ENCODE measurements at regions of chr5 and their contacts with region 1.

Region 1: DNA sequence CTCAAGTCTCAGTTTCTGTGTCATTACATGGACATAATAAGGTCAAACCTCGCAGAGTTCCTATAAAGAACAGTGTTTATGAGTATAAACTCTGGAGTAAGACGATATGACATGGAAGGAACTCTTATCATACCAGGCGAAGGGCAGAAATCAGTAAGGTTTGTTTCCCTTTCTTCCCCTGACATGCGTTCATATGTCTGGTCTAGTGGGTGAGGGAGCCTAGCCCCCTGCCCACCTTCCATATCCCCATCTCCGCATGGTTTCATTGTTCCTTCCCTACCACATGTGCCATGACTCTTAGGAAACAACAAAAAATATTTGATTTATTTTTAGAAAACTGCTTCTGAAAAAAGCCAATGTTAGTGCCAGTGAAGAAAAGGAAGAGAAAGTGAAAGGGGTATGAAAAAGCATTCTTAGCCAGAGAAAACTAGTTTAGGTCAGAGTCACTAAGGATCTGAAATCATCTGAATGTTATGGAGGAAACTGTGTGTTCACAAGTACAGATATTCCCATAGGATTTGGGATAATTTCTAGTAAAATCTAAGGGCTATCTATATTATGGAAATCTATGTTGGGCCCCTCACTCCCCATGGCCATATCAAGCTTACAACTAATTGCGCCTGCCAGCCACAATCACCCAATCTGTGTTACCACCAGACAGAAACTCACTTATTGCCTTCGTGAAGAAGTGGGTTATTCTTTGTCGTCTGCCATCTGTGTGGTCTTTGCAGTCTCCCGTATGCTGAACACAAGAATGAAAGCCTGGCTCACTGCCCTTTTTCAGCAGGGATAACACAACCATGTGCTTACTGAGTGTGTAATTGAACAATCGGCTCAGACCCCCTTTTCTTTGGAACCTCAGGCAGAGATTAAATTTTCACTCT is 19.9 kb upstream of the HMHB1 start:
- DNase-seq: no peak
- ATAC-seq: no peak
- H3K4me3 ChIP-seq: no peak overlapping the region
- H3K27ac ChIP-seq: no peak overlapping the region
- H3K4me1 ChIP-seq: no peaks in the 10 kb centered on the region
- H3K27me3 ChIP-seq: no peaks in the 10 kb centered on the region
- CTCF ChIP-seq: no peak

Region 2: DNA sequence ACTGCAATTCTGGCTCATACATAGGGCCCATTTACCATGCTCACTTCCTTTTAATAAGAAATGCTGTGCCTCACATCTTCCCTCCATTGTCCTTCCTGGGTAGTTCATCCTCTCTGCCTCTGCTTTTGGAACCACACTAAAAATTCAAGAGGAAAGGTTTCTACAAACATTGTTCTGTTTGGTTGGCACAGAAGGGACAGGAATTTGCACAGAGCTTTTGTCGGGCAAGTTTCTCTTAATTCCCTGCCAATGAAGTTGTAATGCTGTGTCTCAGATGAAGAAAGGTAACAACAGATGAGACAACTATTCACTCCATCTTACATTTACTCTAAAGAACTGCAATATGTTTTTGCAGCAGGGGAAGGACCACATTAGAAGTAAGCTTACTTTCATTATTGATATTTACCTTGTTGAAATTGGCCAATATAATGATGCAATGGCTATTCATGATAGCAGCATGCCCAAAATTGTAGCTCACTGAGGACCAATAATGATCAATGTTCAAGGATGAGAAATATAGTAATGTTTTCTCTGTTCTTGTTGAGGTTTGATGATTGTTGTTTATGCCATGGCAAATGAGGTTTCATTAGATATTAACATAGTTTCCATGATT is 62.6 kb before region 1 on chr5:
- CTCF ChIA-PET with region 1: no interaction called
- POLR2A ChIA-PET with region 1: interaction called, 12 read pairs
- in situ Hi-C with region 1: no loop called
- intact Hi-C with region 1: no loop called
- DNase-seq: no peak
- ATAC-seq: no peak
- H3K4me3 ChIP-seq: no peak overlapping the region
- H3K27ac ChIP-seq: no peak overlapping the region
- H3K4me1 ChIP-seq: no peaks in the 10 kb centered on the region
- H3K27me3 ChIP-seq: no peaks in the 10 kb centered on the region; the same call in 1 of the 2 replicates
- CTCF ChIP-seq: no peak

Region 3: GRCh38 chr5:144794922-144795321 is 1002.8 kb after region 1 on chr5:
- CTCF ChIA-PET with region 1: no interaction called
- POLR2A ChIA-PET with region 1: no interaction called
- in situ Hi-C with region 1: no loop called
- intact Hi-C with region 1: no loop called
- DNase-seq: no peak
- ATAC-seq: no peak
- H3K4me3 ChIP-seq: no peak overlapping the region
- H3K27ac ChIP-seq: no peak overlapping the region
- H3K4me1 ChIP-seq: no peaks in the 10 kb centered on the region
- H3K27me3 ChIP-seq: no peaks in the 10 kb centered on the region
- CTCF ChIP-seq: no peak